CD8-positive, alpha-beta T cell (primary cell): ENCODE measurements at regions of chr9 and their contacts with region 1.

Region 1: GRCh38 chr9:20209391-20210340 is 412.6 kb downstream of the MLLT3 start:
- DNase-seq: peak in 7 of 9 experiments; percentile 2 to 74 (median 49)
- ATAC-seq: peak; percentile 92
- H3K4me3 ChIP-seq: no peak overlapping the region
- H3K4me3 Mint-ChIP-seq: peak overlapping the region; percentile 59
- H3K27ac ChIP-seq: no peak overlapping the region
- H3K27ac Mint-ChIP-seq: peak overlapping the region; percentile 70
- H3K4me1 ChIP-seq: peaks cover 33% of the 10 kb centered on the region
- H3K4me1 Mint-ChIP-seq: peaks cover 35% of the 10 kb centered on the region
- H3K27me3 ChIP-seq: no peaks in the 10 kb centered on the region
- H3K27me3 Mint-ChIP-seq: no peaks in the 10 kb centered on the region
- CTCF ChIP-seq: no peak

Region 2: GRCh38 chr9:20152151-20152725 is 57.4 kb before region 1 on chr9:
- CTCF ChIA-PET with region 1: no interaction called
- POLR2A ChIA-PET with region 1: no interaction called
- intact Hi-C with region 1: loop called in 1 of 2 experiments (anchors 10 kb)
- DNase-seq: no peak
- ATAC-seq: no peak
- H3K4me3 ChIP-seq: no peak overlapping the region
- H3K4me3 Mint-ChIP-seq: no peak overlapping the region
- H3K27ac ChIP-seq: no peak overlapping the region
- H3K27ac Mint-ChIP-seq: no peak overlapping the region
- H3K4me1 ChIP-seq: no peaks in the 10 kb centered on the region
- H3K4me1 Mint-ChIP-seq: no peaks in the 10 kb centered on the region
- H3K27me3 ChIP-seq: no peaks in the 10 kb centered on the region
- H3K27me3 Mint-ChIP-seq: peaks cover 3% of the 10 kb centered on the region
- CTCF ChIP-seq: no peak

Region 3: GRCh38 chr9:20271096-20271495 is 61.4 kb after region 1 on chr9:
- CTCF ChIA-PET with region 1: no interaction called
- POLR2A ChIA-PET with region 1: no interaction called
- intact Hi-C with region 1: loop called in 1 of 2 experiments (anchors 10 kb)
- DNase-seq: peak in 2 of 9 experiments; percentile 4 to 9
- ATAC-seq: no peak
- H3K4me3 ChIP-seq: no peak overlapping the region
- H3K4me3 Mint-ChIP-seq: no peak overlapping the region
- H3K27ac ChIP-seq: no peak overlapping the region
- H3K27ac Mint-ChIP-seq: no peak overlapping the region
- H3K4me1 ChIP-seq: no peaks in the 10 kb centered on the region
- H3K4me1 Mint-ChIP-seq: peaks cover 4% of the 10 kb centered on the region
- H3K27me3 ChIP-seq: no peaks in the 10 kb centered on the region
- H3K27me3 Mint-ChIP-seq: no peaks in the 10 kb centered on the region
- CTCF ChIP-seq: no peak